Heart left ventricle (tissue), 16 donors: ENCODE measurements at regions of chr3 and their contacts with region 1.

Region 1: DNA sequence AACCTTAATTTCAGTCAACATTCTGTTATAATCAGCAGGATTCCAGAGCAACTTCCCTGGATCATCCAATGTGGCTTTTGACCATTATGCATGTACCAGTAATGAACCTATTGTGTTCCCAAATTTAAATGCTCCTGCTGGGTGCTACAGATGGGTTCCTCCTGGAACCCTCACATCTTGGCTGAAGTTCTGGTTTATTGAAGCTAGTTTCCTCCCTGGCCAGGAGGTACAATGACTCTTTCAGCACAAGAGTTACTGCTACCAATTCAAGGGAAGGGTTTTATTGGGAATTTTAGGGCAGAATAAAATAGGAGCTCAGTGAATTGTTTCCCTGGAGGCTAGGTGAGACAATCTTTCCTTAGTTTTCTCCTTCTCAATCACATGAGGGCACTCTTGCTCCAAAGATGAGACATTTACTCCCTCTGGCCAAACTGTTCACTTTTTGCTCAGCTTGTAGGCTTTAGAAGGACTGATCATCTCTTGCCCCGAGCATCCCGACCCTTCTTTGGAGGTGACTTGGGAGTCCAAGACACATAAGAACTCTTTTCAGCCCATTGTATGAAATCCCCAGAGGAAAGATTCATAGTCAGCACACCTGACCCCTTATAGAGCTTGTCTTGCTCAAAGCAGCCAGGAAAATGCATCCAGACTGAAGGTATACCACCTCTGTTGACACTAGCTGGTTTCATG is 8.8 kb upstream of the NPHP3 start:
- DNase-seq: peak in 2 of 5 donors; percentile 14 to 18
- ATAC-seq: peak; percentile 42 to 83 (median 71)
- H3K4me3 ChIP-seq: no peak overlapping the region
- H3K27ac ChIP-seq: no peak overlapping the region
- H3K4me1 ChIP-seq: peaks cover 0 to 2% (median 0%) of the 10 kb centered on the region in 12 donors
- H3K27me3 ChIP-seq: peaks cover 0 to 4% (median 0%) of the 10 kb centered on the region in 9 donors
- CTCF ChIP-seq: peak in 11 of 12 donors; percentile 18 to 61 (median 44)
- POLR2A ChIP-seq: no peak

Region 2: DNA sequence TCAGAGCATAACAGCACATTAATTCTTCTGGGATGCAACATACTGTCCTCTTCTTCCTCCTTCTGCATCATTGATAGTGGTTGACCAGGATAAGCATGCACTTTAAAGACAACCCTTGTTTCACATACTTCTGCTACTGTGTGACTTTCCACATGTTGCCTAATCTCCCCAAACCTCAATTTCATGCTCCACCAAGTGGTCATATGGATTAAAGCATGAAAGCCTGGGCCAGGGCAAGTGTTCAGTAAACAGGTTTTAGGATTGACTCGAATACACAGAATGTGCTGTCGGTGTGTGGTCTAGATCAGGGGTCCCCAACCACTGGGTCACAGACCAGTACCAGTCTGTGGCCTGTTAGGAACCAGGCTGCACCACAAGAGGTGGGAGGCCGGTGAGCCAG is 646.4 kb after region 1 on chr3:
- intact Hi-C with region 1: loop called in 7 of 10 experiments (anchors 2 to 5 kb)
- DNase-seq: no peak
- ATAC-seq: peak in 3 of 4 donors; percentile 47 to 73 (median 51)
- H3K4me3 ChIP-seq: no peak overlapping the region
- H3K27ac ChIP-seq: no peak overlapping the region
- H3K4me1 ChIP-seq: peaks cover 0 to 8% (median 0%) of the 10 kb centered on the region in 12 donors
- H3K27me3 ChIP-seq: no peaks in the 10 kb centered on the region
- CTCF ChIP-seq: peak; percentile 18 to 54 (median 40)
- POLR2A ChIP-seq: no peak

Region 3: DNA sequence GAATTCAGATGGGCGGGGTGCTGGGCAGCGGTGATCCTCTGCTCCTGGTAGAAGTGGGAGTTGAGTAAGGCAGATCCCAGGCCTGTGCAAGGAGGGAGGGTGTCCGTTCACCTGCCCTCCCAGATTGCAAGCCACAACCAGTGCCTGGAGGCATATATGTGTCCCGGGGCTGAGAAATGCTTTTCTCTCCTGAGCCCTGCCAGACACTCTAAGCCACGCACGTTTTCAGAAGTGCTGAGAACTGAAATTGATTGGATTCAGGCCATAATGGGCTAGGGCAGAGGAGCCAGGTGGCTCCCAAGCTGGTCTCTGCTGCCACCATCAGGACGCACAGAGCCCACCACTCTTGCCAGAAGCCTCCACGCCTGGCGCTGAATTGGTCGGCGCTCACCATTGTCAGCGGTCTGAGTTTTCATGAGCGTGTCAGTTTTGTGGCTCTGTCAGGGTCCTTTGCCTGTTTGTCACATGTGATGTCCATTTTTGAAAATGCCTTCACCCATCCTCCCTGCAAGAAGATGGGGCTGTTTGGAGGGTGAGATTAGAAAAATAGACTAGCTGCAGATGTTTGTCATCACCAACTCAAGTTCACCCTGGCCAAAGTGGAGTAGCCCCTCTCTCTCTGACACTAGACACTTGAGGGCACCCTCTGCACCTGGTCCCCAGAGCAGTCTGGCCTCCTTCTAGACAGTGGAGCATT is 653.4 kb after region 1 on chr3:
- intact Hi-C with region 1: loop called (anchors 2 to 5 kb)
- DNase-seq: peak; percentile 45 to 78 (median 56)
- ATAC-seq: peak; percentile 87 to 94 (median 91)
- H3K4me3 ChIP-seq: no peak overlapping the region
- H3K27ac ChIP-seq: no peak overlapping the region
- H3K4me1 ChIP-seq: peaks cover 0 to 8% (median 0%) of the 10 kb centered on the region in 12 donors
- H3K27me3 ChIP-seq: peaks cover 0 to 3% (median 0%) of the 10 kb centered on the region in 9 donors
- CTCF ChIP-seq: peak; percentile 56 to 85 (median 76)
- POLR2A ChIP-seq: no peak

Region 4: GRCh38 chr3:133426721-133427120 is 695.7 kb after region 1 on chr3:
- intact Hi-C with region 1: loop called (anchors 1 to 5 kb)
- DNase-seq: no peak
- ATAC-seq: peak in 1 of 4 donors; percentile 39
- H3K4me3 ChIP-seq: no peak overlapping the region
- H3K27ac ChIP-seq: no peak overlapping the region
- H3K4me1 ChIP-seq: peaks cover 0 to 5% (median 0%) of the 10 kb centered on the region in 12 donors
- H3K27me3 ChIP-seq: peaks cover 0 to 19% (median 6%) of the 10 kb centered on the region in 9 donors
- CTCF ChIP-seq: no peak
- POLR2A ChIP-seq: no peak